Activated B cell treated with CpG ODN at 0.5 μM for 24 hours (primary cell): ENCODE measurements at regions of chr14 and their contacts with region 1.

Region 1: DNA sequence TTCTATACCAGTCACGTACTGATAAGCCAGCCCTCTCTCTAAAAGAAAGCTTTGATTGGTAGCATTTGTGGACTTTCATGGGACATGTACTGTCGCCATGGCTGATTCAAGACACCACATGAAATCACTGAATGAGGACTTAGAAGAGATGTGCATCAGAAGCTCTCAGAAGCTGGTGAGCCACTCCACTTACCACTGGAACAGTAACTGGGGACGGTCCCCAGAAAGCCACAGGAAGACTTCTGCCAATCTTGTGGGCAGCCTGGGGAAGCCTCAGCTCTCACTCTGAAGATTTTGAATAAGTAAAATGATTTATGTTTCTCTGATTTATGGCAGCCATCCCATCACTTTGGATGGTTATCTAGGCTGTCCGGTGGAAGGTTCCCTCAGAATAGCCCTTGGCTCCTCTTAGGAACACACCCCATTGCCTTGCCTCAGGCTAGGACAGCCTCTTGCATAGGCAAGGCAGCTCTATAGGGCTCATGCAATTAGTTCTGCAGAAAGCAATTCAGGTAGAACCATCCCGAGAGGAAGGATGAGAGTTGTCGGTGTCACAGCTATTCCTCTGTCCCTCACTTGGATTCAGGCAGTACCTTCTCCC is 9.8 kb downstream of the DHRS1 start:
- DNase-seq: no peak
- ATAC-seq: peak; percentile 97
- H3K4me3 Mint-ChIP-seq: peak overlapping the region; percentile 15
- H3K27ac Mint-ChIP-seq: peak overlapping the region; percentile 70
- H3K4me1 Mint-ChIP-seq: peaks cover 27% of the 10 kb centered on the region
- H3K27me3 Mint-ChIP-seq: no peaks in the 10 kb centered on the region
- CTCF ChIP-seq: no peak

Region 2: GRCh38 chr14:24279301-24280186 is 10.2 kb before region 1 on chr14:
- CTCF ChIA-PET with region 1: interaction called, 64 read pairs
- POLR2A ChIA-PET with region 1: interaction called, 61 read pairs
- intact Hi-C with region 1: loop called (anchors 1 kb)
- DNase-seq: peak; percentile 54
- ATAC-seq: peak; percentile 89
- H3K4me3 Mint-ChIP-seq: peak overlapping the region; percentile 63
- H3K27ac Mint-ChIP-seq: peak overlapping the region; percentile 90
- H3K4me1 Mint-ChIP-seq: peaks cover 73% of the 10 kb centered on the region
- H3K27me3 Mint-ChIP-seq: no peaks in the 10 kb centered on the region
- CTCF ChIP-seq: no peak

Region 3: GRCh38 chr14:24695265-24696241 is 405.8 kb after region 1 on chr14:
- CTCF ChIA-PET with region 1: no interaction called
- POLR2A ChIA-PET with region 1: no interaction called
- intact Hi-C with region 1: no loop called
- DNase-seq: no peak
- ATAC-seq: peak; percentile 59
- H3K4me3 Mint-ChIP-seq: no peak overlapping the region
- H3K27ac Mint-ChIP-seq: no peak overlapping the region
- H3K4me1 Mint-ChIP-seq: peaks cover 32% of the 10 kb centered on the region
- H3K27me3 Mint-ChIP-seq: no peaks in the 10 kb centered on the region
- CTCF ChIP-seq: no peak

Region 4: DNA sequence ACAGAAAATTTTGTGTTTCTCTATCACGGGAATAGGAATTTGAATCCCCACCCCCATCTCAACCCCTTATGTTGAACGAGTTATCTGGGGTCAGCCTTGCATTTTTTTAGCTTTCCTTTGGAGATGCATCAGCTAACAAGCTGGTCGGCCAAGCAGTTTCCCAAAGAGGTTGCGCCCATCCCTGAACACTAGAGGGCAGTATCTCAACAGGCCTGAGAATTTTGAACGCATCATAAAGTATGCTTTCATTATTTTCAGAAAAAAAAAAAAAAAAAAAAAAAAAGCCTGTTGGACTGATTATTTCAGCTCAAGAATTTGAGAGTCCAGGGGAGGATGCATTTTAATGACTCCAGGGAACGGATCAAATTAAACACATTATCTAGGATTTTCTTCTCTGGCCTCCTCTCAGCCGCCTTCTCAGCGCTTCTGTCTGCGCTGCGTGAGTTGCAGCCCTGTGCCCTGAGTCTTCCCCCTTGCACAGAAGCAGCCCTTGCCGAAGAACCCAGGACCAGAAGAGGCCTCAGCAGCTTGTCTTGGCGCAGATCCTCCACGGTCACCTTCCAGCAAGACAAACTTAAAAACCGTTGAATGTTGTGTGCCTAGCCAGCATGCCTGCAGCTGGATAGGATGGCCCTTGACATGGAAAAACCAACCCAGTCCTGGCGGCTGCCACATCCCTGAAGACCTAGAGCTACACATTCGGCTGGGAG is 420.8 kb after region 1 on chr14:
- CTCF ChIA-PET with region 1: no interaction called
- POLR2A ChIA-PET with region 1: no interaction called
- intact Hi-C with region 1: no loop called
- DNase-seq: no peak
- ATAC-seq: no peak
- H3K4me3 Mint-ChIP-seq: no peak overlapping the region
- H3K27ac Mint-ChIP-seq: no peak overlapping the region
- H3K4me1 Mint-ChIP-seq: peaks cover 31% of the 10 kb centered on the region
- H3K27me3 Mint-ChIP-seq: peaks cover 3% of the 10 kb centered on the region
- CTCF ChIP-seq: peak; percentile 33